ENCODE measurements at regions of chr9 and their contacts with region 1.

Region 1: DNA sequence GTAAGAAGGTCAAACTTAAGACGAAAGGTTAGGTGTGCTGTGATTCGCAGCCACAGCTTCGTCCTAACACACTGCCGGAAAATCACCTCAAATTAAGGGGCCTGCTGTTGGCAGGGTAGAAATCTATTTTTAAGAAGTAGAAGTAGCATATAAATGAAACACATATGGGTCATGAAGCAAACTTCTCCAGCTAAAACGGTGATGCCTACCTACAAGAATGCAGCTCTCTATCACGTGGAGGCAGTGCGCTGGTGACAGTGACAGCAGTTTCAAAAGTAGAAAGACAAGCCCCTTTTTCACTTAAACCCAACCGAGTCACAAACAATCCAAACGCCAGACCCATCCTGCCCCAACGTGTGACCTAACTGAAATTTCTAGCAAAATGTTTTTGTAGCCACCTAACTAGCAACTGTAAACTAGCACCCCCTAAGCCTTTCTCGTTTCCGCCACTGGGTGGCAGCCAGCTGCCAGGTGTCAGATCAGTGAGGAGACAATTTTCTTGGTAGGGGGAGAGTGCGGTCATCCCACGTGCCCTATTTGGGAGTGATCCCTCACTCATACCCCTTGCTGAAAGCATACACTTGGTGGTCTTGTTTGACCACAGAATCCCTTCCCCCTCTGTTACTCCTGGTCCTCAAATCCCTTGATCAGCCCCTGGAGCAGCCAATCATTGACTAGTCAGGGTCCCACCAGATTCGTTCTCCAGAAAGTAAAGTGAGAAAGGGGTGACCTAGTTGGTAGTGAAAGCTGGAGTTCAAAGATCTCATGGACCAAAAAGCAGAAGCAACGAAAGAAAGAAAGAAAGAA is 71.8 kb upstream of the MAMDC2 start:
- DNase-seq: peak; percentile 91

Region 2: GRCh38 chr9:70108181-70108580 is 136.3 kb after region 1 on chr9:
- intact Hi-C with region 1: loop called (anchors 2 to 5 kb)
- DNase-seq: no peak

Region 3: GRCh38 chr9:70113403-70114022 is 141.7 kb after region 1 on chr9:
- intact Hi-C with region 1: loop called (anchors 2 to 5 kb)
- DNase-seq: no peak

Measured in posterior vena cava (tissue), 2 donors.